A673 (cell line): ENCODE measurements at regions of chr9 and their contacts with region 1.

Region 1: DNA sequence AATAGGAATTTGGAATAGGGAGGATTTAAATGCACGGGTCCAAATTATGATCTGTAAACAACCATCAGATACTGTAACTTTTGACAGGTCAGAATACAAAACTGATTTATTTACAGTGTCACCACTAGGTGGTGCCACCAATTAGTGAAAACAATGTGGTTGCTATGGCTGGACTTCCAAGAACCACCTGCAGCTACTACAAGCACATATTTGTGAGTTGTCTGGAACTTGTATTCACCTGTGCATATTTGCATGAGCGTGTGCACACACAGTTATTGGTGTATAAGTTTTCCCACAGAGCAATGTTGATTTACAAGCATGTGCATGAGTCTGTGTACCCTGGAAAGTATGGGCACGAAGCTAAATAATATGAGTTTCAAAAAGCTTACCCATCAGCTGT is 3.0 kb upstream of the HRCT1 start:
- DNase-seq: peak; percentile 65
- H3K4me3 ChIP-seq: no peak overlapping the region
- H3K27ac ChIP-seq: no peak overlapping the region
- H3K4me1 ChIP-seq: peaks cover 27% of the 10 kb centered on the region
- H3K27me3 ChIP-seq: no peaks in the 10 kb centered on the region
- CTCF ChIP-seq: peak; percentile 77

Region 2: GRCh38 chr9:35579130-35579529 is 323.9 kb before region 1 on chr9:
- CTCF ChIA-PET with region 1: no interaction called
- POLR2A ChIA-PET with region 1: no interaction called
- intact Hi-C with region 1: no loop called
- DNase-seq: no peak
- H3K4me3 ChIP-seq: no peak overlapping the region
- H3K27ac ChIP-seq: no peak overlapping the region
- H3K4me1 ChIP-seq: no peaks in the 10 kb centered on the region
- H3K27me3 ChIP-seq: no peaks in the 10 kb centered on the region
- CTCF ChIP-seq: no peak

Region 3: GRCh38 chr9:35945341-35946018 is 42.4 kb after region 1 on chr9:
- CTCF ChIA-PET with region 1: interaction called, 34 read pairs
- POLR2A ChIA-PET with region 1: no interaction called
- intact Hi-C with region 1: loop called (anchors 5 kb)
- DNase-seq: peak; percentile 96
- H3K4me3 ChIP-seq: peak overlapping the region; percentile 30
- H3K27ac ChIP-seq: no peak overlapping the region
- H3K4me1 ChIP-seq: peaks cover 5% of the 10 kb centered on the region
- H3K27me3 ChIP-seq: no peaks in the 10 kb centered on the region
- CTCF ChIP-seq: peak; percentile 88

Region 4: GRCh38 chr9:36023260-36024048 is 120.4 kb after region 1 on chr9:
- CTCF ChIA-PET with region 1: interaction called, 5 read pairs
- POLR2A ChIA-PET with region 1: no interaction called
- intact Hi-C with region 1: loop called (anchors 5 kb)
- DNase-seq: peak; percentile 71
- H3K4me3 ChIP-seq: no peak overlapping the region
- H3K27ac ChIP-seq: no peak overlapping the region
- H3K4me1 ChIP-seq: no peaks in the 10 kb centered on the region
- H3K27me3 ChIP-seq: no peaks in the 10 kb centered on the region
- CTCF ChIP-seq: peak; percentile 87